ENCODE measurements at regions of chr3 and their contacts with region 1.

Region 1: DNA sequence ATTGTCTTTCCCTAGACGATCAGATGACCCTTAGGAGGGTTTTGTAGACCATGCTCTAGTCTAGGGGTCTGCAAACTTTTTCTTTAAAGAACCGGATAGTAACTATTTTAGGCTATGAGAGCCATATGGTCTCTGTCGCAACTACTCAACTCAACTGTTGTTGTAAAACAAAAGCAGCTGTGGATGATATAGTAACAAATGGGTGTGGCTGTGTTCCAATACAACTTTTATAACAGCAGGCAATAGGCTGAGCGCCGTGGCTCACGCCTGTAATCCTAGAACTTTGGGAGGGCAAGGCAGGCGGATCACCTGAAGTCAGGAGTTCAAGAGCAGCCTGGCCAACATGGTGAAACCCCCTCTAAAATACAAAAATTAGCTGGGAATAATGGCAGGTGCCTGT is 6.1 kb upstream of the CMTM6 start:
- DNase-seq: no peak
- H3K4me3 ChIP-seq: no peak overlapping the region
- H3K27ac ChIP-seq: no peak overlapping the region
- H3K4me1 ChIP-seq: no peaks in the 10 kb centered on the region
- H3K27me3 ChIP-seq: no peaks in the 10 kb centered on the region
- CTCF ChIP-seq: no peak
- POLR2A ChIP-seq: no peak

Region 2: GRCh38 chr3:32667122-32667521 is 158.4 kb after region 1 on chr3:
- intact Hi-C with region 1: loop called (anchors 2 kb)
- DNase-seq: no peak
- H3K4me3 ChIP-seq: no peak overlapping the region
- H3K27ac ChIP-seq: no peak overlapping the region
- H3K4me1 ChIP-seq: no peaks in the 10 kb centered on the region
- H3K27me3 ChIP-seq: no peaks in the 10 kb centered on the region
- CTCF ChIP-seq: no peak
- POLR2A ChIP-seq: no peak

Measured in prostate gland (tissue), 2 donors.